ENCODE measurements at regions of chr12 and their contacts with region 1.

Region 1: GRCh38 chr12:77925536-77926108 is 94.9 kb downstream of the NAV3 start:
- DNase-seq: peak in 1 of 2 donors; percentile 75
- H3K4me3 ChIP-seq: no peak overlapping the region
- H3K27ac ChIP-seq: no peak overlapping the region
- H3K4me1 ChIP-seq: no peaks in the 10 kb centered on the region
- H3K27me3 ChIP-seq: no peaks in the 10 kb centered on the region
- CTCF ChIP-seq: peak; percentile 35 to 72 (median 66)

Region 2: GRCh38 chr12:77724367-77724957 is 201.2 kb before region 1 on chr12:
- intact Hi-C with region 1: loop called (anchors 2 kb)
- DNase-seq: no peak
- H3K4me3 ChIP-seq: no peak overlapping the region
- H3K27ac ChIP-seq: no peak overlapping the region
- H3K4me1 ChIP-seq: no peaks in the 10 kb centered on the region
- H3K27me3 ChIP-seq: no peaks in the 10 kb centered on the region
- CTCF ChIP-seq: peak in 2 of 3 experiments; percentile 23 to 35

Region 3: DNA sequence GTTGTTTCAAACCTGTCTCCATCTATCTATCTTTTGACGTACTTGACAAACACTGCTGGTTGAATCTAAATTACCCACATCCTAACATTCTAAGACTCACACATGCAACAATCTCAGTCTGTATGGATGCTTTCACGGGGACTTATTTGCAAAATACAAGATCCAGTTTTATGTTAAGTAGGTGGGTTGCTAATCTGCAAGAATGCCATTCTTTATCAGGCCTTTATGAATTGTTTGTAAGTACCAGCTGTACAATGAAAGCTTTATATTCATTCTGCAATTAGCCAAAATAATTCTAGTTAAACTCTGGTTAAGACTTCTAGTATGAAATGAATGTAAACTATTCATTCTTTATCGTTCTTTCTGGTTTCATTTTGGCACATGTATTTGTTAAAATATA is 40.2 kb after region 1 on chr12:
- intact Hi-C with region 1: no loop called
- DNase-seq: no peak
- H3K4me3 ChIP-seq: no peak overlapping the region
- H3K27ac ChIP-seq: no peak overlapping the region
- H3K4me1 ChIP-seq: no peaks in the 10 kb centered on the region
- H3K27me3 ChIP-seq: no peaks in the 10 kb centered on the region
- CTCF ChIP-seq: no peak

Region 4: GRCh38 chr12:77995436-77996167 is 70.0 kb after region 1 on chr12:
- intact Hi-C with region 1: no loop called
- DNase-seq: no peak
- H3K4me3 ChIP-seq: no peak overlapping the region
- H3K27ac ChIP-seq: no peak overlapping the region
- H3K4me1 ChIP-seq: no peaks in the 10 kb centered on the region
- H3K27me3 ChIP-seq: no peaks in the 10 kb centered on the region
- CTCF ChIP-seq: no peak

Region 5: GRCh38 chr12:78018171-78018910 is 92.7 kb after region 1 on chr12:
- intact Hi-C with region 1: no loop called
- DNase-seq: no peak
- H3K4me3 ChIP-seq: no peak overlapping the region
- H3K27ac ChIP-seq: no peak overlapping the region
- H3K4me1 ChIP-seq: no peaks in the 10 kb centered on the region
- H3K27me3 ChIP-seq: no peaks in the 10 kb centered on the region
- CTCF ChIP-seq: no peak

Measured in ascending aorta (tissue), 2 donors.